Activated B cell treated with CpG ODN at 0.5 μM for 24 hours (primary cell): ENCODE measurements at regions of chr14 and their contacts with region 1.

Region 1: DNA sequence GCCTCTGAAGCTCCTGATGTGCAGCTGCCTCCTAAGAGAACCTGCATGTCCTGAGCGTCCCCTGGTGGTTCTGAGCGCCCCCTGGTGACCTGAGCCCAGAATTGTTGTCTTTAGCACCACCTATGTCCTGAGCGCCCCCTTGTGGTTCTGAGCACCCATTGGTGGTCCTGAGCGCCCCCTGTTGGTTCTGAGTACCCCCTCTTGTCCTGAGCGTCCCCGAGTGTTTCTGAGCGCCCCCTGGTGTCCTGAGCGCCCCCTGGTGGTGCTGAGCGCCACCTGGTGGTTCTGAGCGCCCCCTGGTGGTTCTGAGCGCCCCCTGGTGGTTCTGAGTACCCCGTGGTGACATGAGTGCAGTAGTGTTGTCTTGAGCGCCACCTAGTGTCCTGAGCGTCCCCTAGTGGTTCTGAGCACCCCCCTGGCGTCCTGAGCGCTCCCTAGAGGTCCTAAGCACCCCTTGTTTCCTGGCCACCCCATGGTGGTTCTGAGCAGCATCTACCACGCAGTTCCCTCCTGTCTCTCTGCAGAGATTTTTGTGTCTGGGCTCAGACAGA is 782.5 kb downstream of the TMEM121 start:
- DNase-seq: peak; percentile 50
- ATAC-seq: peak; percentile 86
- H3K4me3 Mint-ChIP-seq: no peak overlapping the region
- H3K27ac Mint-ChIP-seq: no peak overlapping the region
- H3K4me1 Mint-ChIP-seq: peaks cover 10% of the 10 kb centered on the region
- H3K27me3 Mint-ChIP-seq: peaks cover 2% of the 10 kb centered on the region
- CTCF ChIP-seq: no peak

Region 2: DNA sequence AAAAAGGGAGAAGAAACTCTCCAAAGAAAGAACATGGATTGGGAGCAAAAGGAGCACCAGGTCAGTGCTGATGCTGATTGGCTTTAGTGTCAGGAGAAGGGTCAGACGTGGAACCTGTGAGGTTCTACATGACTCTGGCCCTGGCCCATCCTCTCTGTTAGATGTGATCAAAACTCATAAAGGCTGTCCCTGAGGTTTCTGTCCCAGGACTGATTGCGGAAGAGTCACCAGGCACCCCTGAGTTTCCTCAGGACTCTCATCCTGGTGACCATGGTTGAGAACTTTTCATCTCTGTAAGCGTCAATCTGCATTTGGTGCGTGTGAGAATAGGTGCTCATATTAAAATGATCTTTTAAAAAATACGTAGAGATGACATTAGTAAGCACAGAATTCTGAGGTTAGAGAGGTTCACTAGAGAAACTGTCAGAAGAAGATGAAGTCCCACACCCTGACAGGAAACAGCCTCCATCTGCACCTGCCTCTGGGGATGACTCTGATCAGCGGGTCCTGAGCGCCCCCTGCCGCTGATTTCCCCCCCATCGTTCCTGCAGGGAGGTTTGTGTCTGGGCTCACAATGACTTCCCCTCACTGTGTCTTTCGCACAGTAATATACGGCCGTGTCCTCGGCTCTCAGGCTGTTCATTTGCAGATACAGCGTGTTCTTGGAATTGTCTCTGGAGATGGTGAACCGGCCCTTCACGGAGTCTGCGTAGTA is 40.7 kb before region 1 on chr14:
- CTCF ChIA-PET with region 1: no interaction called
- POLR2A ChIA-PET with region 1: interaction called, 4 read pairs
- intact Hi-C with region 1: loop called (anchors 2 kb)
- DNase-seq: peak; percentile 58
- ATAC-seq: peak; percentile 61
- H3K4me3 Mint-ChIP-seq: peak overlapping the region; percentile 84
- H3K27ac Mint-ChIP-seq: peak overlapping the region; percentile 85
- H3K4me1 Mint-ChIP-seq: peaks cover 6% of the 10 kb centered on the region
- H3K27me3 Mint-ChIP-seq: peaks cover 20% of the 10 kb centered on the region
- CTCF ChIP-seq: no peak

Region 3: DNA sequence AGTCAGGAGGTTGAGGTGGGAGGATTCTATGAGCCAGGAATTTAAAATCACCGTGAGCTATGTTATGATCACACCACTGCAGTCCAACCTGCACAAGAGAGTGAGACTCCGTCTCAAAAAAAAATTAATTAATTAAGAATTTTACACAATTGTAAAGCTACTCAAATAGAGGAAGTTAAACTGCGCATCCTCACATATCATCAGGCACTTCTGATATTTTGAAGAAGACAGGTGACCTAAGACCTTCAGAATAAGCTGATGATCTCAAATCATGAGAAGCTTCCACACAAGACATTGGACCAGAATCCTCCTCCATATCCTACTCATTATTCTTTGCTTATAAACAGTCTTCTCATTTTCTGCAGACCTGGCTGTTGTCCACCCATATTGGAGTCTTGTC is 18.3 kb after region 1 on chr14:
- CTCF ChIA-PET with region 1: no interaction called
- POLR2A ChIA-PET with region 1: no interaction called
- intact Hi-C with region 1: no loop called
- DNase-seq: no peak
- ATAC-seq: no peak
- H3K4me3 Mint-ChIP-seq: no peak overlapping the region
- H3K27ac Mint-ChIP-seq: no peak overlapping the region
- H3K4me1 Mint-ChIP-seq: peaks cover 3% of the 10 kb centered on the region
- H3K27me3 Mint-ChIP-seq: peaks cover 8% of the 10 kb centered on the region
- CTCF ChIP-seq: no peak